PC-9 (cell line): ENCODE measurements at regions of chr19 and their contacts with region 1.

Region 1: DNA sequence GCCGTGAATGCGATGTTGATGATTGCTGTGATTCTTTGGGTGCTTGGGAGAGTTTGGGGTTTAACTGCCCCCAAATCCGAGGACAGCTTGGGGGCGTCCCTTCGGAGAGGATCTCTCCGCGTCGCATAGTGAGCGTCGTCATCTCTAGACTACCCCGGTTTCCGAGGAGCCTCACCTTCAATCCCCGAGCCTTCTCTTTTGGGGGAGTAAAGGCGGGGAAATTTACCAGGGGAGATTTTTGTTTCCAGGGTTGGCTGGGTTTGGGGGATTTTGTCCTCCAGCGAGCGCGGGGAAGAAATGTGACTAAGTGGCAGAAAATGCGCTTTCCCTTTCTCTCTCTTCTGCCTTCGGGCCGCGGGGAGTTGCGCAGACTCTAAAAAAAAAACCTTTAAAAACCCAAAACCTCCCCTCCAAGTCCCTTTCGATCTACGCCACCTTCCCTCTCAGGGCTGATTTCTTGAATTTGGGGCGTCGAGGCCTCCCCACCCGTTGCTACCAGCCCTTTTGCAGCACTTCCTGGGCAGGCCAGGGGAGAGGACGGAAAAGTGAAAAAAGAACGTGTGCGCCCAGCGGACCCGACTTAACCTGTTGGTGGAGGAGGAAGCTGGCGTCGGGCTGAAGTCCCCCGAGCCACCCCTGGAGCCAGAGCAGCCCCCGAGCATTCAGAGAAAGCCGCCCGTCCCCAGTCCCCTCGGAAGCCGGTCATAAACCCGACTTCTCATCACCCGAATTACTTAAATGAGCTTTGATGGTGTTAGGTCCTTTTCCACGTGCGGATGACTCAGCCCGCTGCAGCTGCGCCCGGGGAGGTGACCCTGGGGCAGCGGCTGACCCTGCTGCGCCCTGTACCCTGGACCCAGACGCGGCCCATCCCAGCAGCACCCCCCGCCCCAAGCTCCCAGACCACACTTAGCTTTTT is 17.7 kb downstream of the NFIX start:
- DNase-seq: peak in 1 of 2 experiments; percentile 34
- H3K4me3 ChIP-seq: peak overlapping the region; percentile 41; the same call in 1 of the 2 replicates
- H3K27ac ChIP-seq: no peak overlapping the region
- H3K4me1 ChIP-seq: peaks cover 13% of the 10 kb centered on the region
- H3K27me3 ChIP-seq: peaks cover 7% of the 10 kb centered on the region; the same call in 1 of the 2 replicates
- CTCF ChIP-seq: no peak

Region 2: DNA sequence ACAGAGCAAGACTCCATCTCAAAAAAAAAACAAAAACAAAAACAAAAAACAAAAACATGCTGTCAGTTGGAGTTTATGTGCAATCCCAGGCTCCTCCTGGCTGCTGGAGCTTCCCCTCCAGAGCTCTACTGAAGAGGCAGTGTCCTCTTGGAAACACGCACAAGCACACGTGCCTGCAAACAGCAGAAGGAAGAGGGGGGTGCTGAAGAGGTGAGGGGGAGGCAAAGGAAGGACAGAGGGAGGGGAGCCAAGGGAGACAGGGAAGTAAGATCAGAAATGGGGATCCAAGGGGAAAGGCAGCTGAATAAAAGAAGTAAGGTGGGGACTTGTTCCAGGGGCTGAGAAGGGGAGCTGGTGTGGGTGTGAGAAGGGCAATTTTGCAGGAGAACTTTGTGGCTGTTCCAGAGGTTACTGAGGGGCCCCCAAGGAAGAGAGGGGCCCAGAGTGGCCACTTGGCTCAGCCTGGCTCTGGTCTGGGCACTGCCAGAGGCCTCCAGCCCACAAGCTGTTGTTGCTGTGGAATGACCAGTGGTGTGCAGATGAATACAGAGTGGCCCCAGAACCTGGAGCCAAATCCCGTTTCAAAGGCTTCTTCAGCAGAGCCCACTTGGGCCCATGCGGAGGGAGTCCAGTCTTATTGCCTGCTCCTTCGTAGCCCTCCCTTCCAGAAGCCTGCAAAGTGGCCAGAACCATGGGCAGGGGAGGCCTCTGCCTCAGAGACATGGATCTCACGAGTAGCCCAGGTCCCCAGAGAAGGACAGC is 55.3 kb after region 1 on chr19:
- CTCF ChIA-PET with region 1: no interaction called
- POLR2A ChIA-PET with region 1: interaction called, 16 read pairs
- intact Hi-C with region 1: no loop called
- DNase-seq: no peak
- H3K4me3 ChIP-seq: no peak overlapping the region
- H3K27ac ChIP-seq: no peak overlapping the region
- H3K4me1 ChIP-seq: no peaks in the 10 kb centered on the region
- H3K27me3 ChIP-seq: peaks cover 65% of the 10 kb centered on the region
- CTCF ChIP-seq: no peak

Region 3: GRCh38 chr19:13104360-13104847 is 91.5 kb after region 1 on chr19:
- CTCF ChIA-PET with region 1: no interaction called
- POLR2A ChIA-PET with region 1: no interaction called
- intact Hi-C with region 1: no loop called
- DNase-seq: no peak
- H3K4me3 ChIP-seq: no peak overlapping the region
- H3K27ac ChIP-seq: no peak overlapping the region
- H3K4me1 ChIP-seq: no peaks in the 10 kb centered on the region
- H3K27me3 ChIP-seq: no peaks in the 10 kb centered on the region
- CTCF ChIP-seq: no peak; the same call in 1 of the 2 replicates